ENCODE measurements at regions of chr1 and their contacts with region 1.

Region 1: DNA sequence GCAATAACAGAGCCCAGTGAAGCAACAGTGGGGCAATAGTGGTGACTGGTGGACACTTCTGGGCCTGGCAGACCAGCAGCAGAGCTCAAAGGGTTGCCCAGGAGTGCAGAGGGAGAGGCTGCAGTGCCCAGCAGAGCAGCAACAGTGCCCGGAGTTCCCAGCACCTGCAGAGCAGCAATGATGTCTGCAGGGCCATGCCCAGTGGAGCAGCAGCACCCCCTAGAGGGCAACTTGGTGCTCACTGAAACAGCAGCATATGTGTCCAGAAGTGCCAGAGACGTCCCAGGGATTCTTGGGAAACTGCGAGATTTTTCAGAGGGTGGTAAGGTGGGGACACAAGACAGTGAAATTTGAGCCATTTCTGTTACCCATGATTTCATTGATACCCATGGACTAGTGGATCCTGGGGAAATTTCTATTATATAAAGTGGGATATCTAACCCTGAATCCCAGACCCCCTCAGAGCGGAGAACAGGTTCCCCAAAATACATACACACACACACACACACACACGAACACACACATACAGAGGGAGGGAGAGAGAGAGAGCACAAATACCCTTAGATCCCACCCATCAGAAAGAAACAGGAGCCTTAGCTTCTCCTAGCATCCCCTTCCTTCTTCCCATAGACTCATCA is 156.9 kb upstream of the GJB5 start:
- DNase-seq: peak; percentile 58 to 73
- H3K4me3 ChIP-seq: no peak overlapping the region
- H3K4me3 Mint-ChIP-seq: no peak overlapping the region
- H3K27ac Mint-ChIP-seq: no peak overlapping the region
- H3K4me1 ChIP-seq: no peaks in the 10 kb centered on the region
- H3K4me1 Mint-ChIP-seq: no peaks in the 10 kb centered on the region
- H3K27me3 ChIP-seq: no peaks in the 10 kb centered on the region
- H3K27me3 Mint-ChIP-seq: peaks cover 6% of the 10 kb centered on the region
- CTCF ChIP-seq: peak; percentile 72 to 77

Region 2: DNA sequence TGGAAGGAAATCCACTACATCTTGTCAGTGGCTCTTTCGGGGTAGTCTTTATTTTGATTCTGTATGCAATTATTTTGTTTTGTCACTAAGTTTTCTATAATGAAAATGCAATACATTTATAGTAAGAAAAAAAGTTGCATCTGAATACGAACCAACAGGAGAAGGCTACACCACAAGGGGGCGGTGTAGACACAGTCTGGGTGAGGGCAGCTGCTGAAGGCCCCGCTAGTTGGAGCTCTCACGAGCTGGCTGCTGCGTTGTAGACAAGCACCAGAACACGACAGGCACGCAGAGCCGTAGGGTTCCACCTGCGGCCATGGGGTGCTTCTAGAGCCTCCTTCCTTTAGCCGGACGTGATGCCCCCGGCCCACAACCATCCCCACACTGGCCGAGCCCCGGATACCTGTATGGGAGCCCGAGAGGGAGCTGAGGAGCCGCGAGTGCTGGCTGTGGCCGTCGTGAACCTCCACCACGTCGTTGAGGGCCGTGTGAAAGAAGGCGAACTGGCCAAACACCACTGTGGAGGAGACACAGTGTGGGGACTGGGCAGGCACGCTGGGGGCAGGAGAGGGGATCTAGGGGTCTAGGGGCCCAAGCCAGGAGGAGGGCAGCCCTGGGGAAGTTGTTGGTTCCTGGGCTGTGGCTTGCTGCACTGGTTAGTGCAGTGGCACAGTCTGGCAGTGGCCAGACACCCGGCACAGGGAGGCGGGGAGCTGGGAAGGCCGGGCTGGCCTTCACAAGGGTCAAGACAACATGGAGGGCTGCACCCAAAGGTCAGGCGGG is 964.8 kb before region 1 on chr1:
- CTCF ChIA-PET with region 1: interaction called, 3 read pairs
- POLR2A ChIA-PET with region 1: no interaction called
- intact Hi-C with region 1: loop called (anchors 5 kb)
- DNase-seq: peak; percentile 81 to 82
- H3K4me3 ChIP-seq: no peak overlapping the region; the same call in 1 of the 2 replicates
- H3K4me3 Mint-ChIP-seq: no peak overlapping the region
- H3K27ac Mint-ChIP-seq: no peak overlapping the region
- H3K4me1 ChIP-seq: no peaks in the 10 kb centered on the region
- H3K4me1 Mint-ChIP-seq: no peaks in the 10 kb centered on the region
- H3K27me3 ChIP-seq: no peaks in the 10 kb centered on the region
- H3K27me3 Mint-ChIP-seq: peaks cover 22% of the 10 kb centered on the region
- CTCF ChIP-seq: peak; percentile 78 to 98

Region 3: DNA sequence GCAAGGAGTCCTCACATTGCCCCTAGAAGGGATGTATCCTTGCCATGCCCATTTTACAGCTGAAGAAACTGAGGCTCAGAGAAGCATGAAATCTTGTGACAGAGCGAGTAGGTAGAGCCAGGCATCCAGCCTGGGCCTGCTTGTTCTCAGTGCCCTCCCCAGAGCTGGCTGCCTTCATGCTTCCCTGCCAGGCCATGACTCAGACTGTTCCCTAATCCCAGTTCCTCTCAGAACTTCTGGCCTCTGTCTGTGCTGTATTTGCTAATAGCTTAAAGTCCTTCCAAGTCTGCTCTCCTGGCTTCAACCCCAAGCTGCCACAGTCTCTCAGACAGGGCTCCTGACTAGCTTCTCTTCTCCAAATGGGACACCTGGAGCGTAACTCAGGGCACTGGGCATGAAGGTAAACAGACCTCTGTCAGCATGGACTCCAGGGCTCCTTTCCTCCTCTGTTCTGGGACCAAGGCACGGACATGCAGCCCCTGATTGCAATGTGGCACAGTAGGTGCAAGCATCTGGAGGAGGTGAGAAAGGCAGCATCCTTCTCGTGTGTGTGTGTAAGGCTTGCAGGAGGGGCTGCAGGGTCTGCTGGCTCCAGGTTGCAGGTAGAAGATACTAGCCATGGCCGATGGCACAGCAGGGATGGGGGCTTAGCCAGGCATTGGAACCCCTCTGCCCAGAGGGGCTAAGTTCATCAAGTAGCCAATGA is 611.5 kb before region 1 on chr1:
- CTCF ChIA-PET with region 1: no interaction called
- POLR2A ChIA-PET with region 1: no interaction called
- intact Hi-C with region 1: no loop called
- DNase-seq: no peak
- H3K4me3 ChIP-seq: no peak overlapping the region
- H3K4me3 Mint-ChIP-seq: no peak overlapping the region
- H3K27ac Mint-ChIP-seq: no peak overlapping the region
- H3K4me1 ChIP-seq: no peaks in the 10 kb centered on the region
- H3K4me1 Mint-ChIP-seq: no peaks in the 10 kb centered on the region
- H3K27me3 ChIP-seq: no peaks in the 10 kb centered on the region
- H3K27me3 Mint-ChIP-seq: peaks cover 14% of the 10 kb centered on the region
- CTCF ChIP-seq: no peak

Region 4: GRCh38 chr1:34460193-34460592 is 137.8 kb before region 1 on chr1:
- CTCF ChIA-PET with region 1: interaction called, 5 read pairs
- POLR2A ChIA-PET with region 1: no interaction called
- intact Hi-C with region 1: loop called (anchors 1 kb)
- DNase-seq: peak; percentile 26 to 38
- H3K4me3 ChIP-seq: no peak overlapping the region
- H3K4me3 Mint-ChIP-seq: no peak overlapping the region
- H3K27ac Mint-ChIP-seq: no peak overlapping the region
- H3K4me1 ChIP-seq: no peaks in the 10 kb centered on the region
- H3K4me1 Mint-ChIP-seq: no peaks in the 10 kb centered on the region
- H3K27me3 ChIP-seq: no peaks in the 10 kb centered on the region
- H3K27me3 Mint-ChIP-seq: no peaks in the 10 kb centered on the region
- CTCF ChIP-seq: peak in 1 of 2 experiments; percentile 15

Region 5: DNA sequence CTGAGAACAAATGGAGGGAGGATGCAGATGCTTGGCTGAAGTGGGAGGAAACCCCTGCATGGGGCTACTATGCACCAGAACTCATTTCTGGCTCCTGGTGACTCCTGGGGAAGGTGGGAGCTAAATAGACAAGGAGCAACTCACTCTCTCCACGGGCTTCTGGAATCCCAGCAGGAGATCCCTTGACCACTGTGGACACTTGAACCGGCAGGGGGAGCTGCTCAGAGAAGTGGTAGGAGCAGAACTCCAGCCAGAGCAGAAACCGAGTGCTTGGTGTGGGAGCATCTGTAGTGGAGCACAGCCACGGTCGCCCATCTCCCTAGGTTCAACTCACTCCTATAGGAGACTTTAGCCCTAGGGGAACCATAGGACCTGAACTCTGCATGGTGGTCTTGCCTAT is 48.8 kb before region 1 on chr1:
- CTCF ChIA-PET with region 1: no interaction called
- POLR2A ChIA-PET with region 1: no interaction called
- intact Hi-C with region 1: loop called (anchors 5 kb)
- DNase-seq: peak; percentile 46 to 49
- H3K4me3 ChIP-seq: no peak overlapping the region
- H3K4me3 Mint-ChIP-seq: no peak overlapping the region
- H3K27ac Mint-ChIP-seq: no peak overlapping the region
- H3K4me1 ChIP-seq: no peaks in the 10 kb centered on the region
- H3K4me1 Mint-ChIP-seq: no peaks in the 10 kb centered on the region
- H3K27me3 ChIP-seq: no peaks in the 10 kb centered on the region
- H3K27me3 Mint-ChIP-seq: no peaks in the 10 kb centered on the region
- CTCF ChIP-seq: peak; percentile 18 to 27

Measured in Caco-2 (cell line).